GM12878 (cell line): ENCODE measurements at regions of chr4 and their contacts with region 1.

Region 1: DNA sequence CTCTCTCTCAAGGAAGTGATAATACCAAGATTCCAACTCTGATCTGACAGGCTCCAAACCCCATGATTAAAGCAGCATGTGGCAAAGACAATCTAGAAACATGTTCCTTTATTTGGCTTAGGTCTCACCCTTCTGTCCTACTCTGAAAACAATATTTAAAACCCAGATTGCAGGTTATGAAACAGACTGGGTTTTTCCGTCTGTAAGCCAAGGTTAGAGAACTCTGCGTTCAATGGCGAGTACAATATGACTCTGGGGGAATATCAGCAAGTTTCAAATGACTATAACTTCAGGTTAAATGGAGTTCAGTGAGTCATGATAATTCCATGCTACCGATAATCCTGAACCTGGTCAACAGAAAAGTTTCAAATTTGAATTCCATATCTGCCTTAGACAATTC is 50.8 kb downstream of the ANAPC10 start:
- DNase-seq: peak; percentile 21
- ATAC-seq: peak; percentile 86
- H3K4me3 ChIP-seq: no peak overlapping the region
- H3K27ac ChIP-seq: peak overlapping the region; percentile 38; the same call in 1 of the 2 replicates
- H3K4me1 ChIP-seq: 0 out of 2 replicates have a peak, but pooled peaks cover 4% of the 10 kb centered on the region
- H3K27me3 ChIP-seq: no peaks in the 10 kb centered on the region
- CTCF ChIP-seq: no peak; a peak in 1 of 6 replicates
- EP300 ChIP-seq: peak in 1 of 2 experiments; percentile 26; a peak in 1 of 4 replicates
- POLR2A ChIP-seq: no peak
- RAD21 ChIP-seq: peak; percentile 14; the same call in 1 of the 2 replicates

Region 2: DNA sequence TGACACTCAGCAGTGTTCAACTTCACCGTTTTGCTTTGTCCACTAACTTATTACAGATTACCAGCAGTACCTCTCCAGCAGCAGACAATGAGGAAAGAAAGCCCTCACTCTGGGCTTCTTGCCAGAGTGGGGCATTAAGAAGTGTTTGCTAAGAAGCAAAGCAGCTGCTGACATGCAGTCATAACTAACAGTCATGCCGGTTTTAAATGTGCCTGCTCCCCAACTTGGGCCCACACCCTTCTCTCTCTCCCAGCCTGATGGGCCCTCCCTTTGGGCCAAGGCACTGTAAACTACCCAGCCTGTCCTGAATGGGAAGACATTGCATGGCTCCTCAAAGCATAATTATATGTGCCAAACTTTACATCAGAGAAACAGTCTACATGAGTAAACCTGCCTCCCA is 455.8 kb before region 1 on chr4:
- CTCF ChIA-PET with region 1: no interaction called
- POLR2A ChIA-PET with region 1: no interaction called
- RAD21 ChIA-PET with region 1: no interaction called
- SMC1A ChIA-PET with region 1: no interaction called
- in situ Hi-C with region 1: no loop called
- intact Hi-C with region 1: no loop called
- DNase-seq: no peak
- ATAC-seq: no peak
- H3K4me3 ChIP-seq: no peak overlapping the region
- H3K27ac ChIP-seq: no peak overlapping the region
- H3K4me1 ChIP-seq: no peaks in the 10 kb centered on the region
- H3K27me3 ChIP-seq: no peaks in the 10 kb centered on the region; a peak in 2 of 4 replicates
- CTCF ChIP-seq: no peak
- EP300 ChIP-seq: no peak
- POLR2A ChIP-seq: no peak
- RAD21 ChIP-seq: no peak

Region 3: DNA sequence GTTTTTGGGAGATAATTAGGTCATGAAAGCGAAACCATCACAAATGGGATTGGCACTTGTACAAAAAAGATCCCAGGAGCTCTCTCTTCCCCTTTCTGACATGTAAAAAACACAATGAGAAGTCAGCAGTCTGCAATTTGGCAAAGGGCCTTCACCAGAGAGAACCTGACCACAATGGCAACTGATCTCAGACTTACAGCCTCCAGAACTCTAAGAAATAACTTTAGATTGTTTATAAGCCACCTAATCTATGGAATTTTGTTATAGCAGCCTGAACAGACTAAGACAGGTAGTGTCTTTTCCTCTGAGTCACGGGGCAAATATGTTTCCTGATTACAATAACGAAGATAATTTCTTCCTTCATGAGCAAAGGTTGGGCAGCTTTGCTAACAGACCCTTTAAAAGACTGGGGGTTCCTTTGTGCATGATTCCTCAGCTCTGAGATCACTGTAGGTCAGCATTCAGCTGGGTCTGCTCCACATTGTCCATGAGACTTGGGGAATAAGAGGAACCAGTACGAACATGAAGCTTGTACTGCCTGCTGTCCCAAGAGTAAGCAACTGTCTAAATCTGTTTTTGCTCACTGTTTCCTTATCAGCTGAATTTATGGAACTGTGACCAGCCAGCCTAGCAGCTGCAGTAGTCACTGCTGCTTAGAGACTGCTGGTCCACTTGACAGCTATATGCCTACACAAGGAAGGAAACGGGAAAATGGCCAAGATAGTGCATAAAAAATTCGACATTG is 140.8 kb before region 1 on chr4:
- CTCF ChIA-PET with region 1: interaction called, 4 read pairs
- POLR2A ChIA-PET with region 1: interaction called, 5 read pairs
- RAD21 ChIA-PET with region 1: interaction called, 12 read pairs
- SMC1A ChIA-PET with region 1: interaction called, 8 read pairs
- in situ Hi-C with region 1: no loop called
- intact Hi-C with region 1: loop called (anchors 5 kb)
- DNase-seq: peak; percentile 38
- ATAC-seq: peak; percentile 81
- H3K4me3 ChIP-seq: no peak overlapping the region
- H3K27ac ChIP-seq: peak overlapping the region; percentile 55; the same call in 1 of the 2 replicates
- H3K4me1 ChIP-seq: peaks cover 15% of the 10 kb centered on the region
- H3K27me3 ChIP-seq: no peaks in the 10 kb centered on the region
- CTCF ChIP-seq: no peak
- EP300 ChIP-seq: peak; percentile 44 to 74; a peak in 2 of 4 replicates
- POLR2A ChIP-seq: no peak
- RAD21 ChIP-seq: no peak

Region 4: DNA sequence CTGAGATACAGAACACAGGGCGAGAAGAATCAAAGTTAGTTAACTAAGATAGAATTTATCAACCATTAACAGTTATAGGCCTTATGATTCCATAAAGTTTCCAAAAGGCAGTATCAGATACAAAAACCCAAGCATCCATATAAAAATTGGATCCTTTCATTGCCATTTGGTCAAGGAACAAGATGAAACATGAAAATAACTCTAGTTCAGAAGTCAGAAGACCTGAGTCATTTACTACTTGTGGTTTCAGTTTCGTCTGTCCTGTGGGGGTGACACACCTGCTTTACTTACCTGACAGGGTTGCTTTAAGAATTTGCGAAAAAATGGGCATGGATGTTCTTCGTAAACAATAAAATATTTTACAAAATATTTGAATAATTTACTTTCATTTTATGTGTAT is 80.0 kb before region 1 on chr4:
- CTCF ChIA-PET with region 1: interaction called, 5 read pairs
- POLR2A ChIA-PET with region 1: interaction called, 6 read pairs
- RAD21 ChIA-PET with region 1: interaction called, 19 read pairs
- SMC1A ChIA-PET with region 1: interaction called, 18 read pairs
- in situ Hi-C with region 1: no loop called
- intact Hi-C with region 1: loop called (anchors 1 kb)
- DNase-seq: no peak
- ATAC-seq: peak; percentile 47
- H3K4me3 ChIP-seq: no peak overlapping the region
- H3K27ac ChIP-seq: peak overlapping the region; percentile 25; the same call in 1 of the 2 replicates
- H3K4me1 ChIP-seq: peaks cover 12% of the 10 kb centered on the region
- H3K27me3 ChIP-seq: no peaks in the 10 kb centered on the region
- CTCF ChIP-seq: no peak
- EP300 ChIP-seq: no peak
- POLR2A ChIP-seq: no peak
- RAD21 ChIP-seq: no peak

Region 5: DNA sequence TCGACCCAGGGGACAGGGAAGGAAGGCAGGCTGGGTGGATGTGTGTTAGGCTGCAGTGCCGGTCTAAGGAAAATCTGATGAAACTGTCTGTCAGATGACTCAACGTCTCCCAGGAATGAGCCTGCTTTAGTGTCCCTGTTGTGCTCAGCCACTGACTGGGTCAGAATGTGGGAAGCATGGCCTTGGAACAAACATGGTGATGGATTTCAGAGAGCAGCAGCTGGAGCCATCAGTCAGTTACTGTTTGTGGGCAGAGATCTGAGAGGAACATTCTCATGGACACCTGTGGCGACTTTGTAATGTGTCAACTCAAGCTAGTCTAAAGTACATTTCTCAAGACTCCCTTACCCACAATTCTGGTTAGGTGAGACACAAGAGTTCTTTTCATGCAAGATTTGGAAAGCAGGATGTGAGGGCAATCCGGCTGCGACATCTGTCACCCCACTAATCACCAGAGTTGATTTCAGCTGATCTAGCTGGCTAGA is 12.4 kb before region 1 on chr4:
- CTCF ChIA-PET with region 1: interaction called, 3 read pairs
- POLR2A ChIA-PET with region 1: no interaction called
- RAD21 ChIA-PET with region 1: no interaction called
- SMC1A ChIA-PET with region 1: interaction called, 13 read pairs
- in situ Hi-C with region 1: no loop called
- intact Hi-C with region 1: no loop called
- DNase-seq: no peak
- ATAC-seq: no peak
- H3K4me3 ChIP-seq: no peak overlapping the region
- H3K27ac ChIP-seq: no peak overlapping the region
- H3K4me1 ChIP-seq: peaks cover 6% of the 10 kb centered on the region; the same call in 1 of the 2 replicates
- H3K27me3 ChIP-seq: no peaks in the 10 kb centered on the region
- CTCF ChIP-seq: no peak
- EP300 ChIP-seq: no peak
- POLR2A ChIP-seq: no peak
- RAD21 ChIP-seq: no peak